ENCODE measurements at regions of chr14 and their contacts with region 1.

Region 1: DNA sequence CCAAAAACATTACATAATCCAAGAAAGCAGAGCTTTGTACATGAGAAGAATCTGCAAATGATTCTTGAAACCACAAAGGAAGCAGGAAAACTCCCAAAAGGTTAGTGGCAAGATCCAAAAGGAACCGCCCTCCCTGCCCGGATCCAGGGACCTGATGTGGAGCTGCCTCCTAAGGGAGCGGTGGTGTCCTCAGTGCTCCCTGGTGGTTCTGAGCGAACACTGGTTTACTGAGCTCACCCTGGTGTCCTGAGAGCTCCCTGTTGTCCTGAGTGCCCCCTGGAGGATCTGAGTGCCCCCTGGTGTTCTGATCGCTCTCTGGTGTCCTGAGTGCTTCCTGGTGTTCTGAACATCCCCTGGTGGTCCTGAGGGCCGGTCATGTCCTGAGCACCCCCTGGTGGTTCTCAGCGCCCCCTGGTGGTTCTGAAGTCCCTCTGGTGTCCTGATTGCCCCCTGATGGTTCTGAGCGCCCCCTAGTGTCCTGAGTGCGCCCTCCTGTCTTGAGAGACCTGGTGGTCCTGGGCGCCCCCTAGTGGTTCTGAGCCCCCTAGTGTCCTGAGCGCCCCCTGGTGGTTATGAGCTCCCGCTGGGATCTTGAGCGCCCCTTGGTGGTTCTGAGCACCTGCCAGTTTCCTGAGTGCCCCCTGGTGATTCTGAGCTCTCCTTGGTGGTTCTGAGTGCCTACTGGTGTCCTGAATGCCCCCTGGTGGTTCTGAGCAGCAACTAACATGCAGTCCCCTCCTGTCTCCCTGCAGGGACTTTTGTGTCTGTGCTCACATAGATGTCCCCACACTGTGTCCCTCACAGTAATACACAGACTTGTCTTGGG is 891.1 kb downstream of the TMEM121 start:
- DNase-seq: peak; percentile 55 to 87 (median 72)
- H3K4me3 ChIP-seq: no peak overlapping the region
- H3K4me3 Mint-ChIP-seq: peak overlapping the region in 2 of 8 donors; percentile 36 to 59
- H3K27ac ChIP-seq: no peak overlapping the region
- H3K27ac Mint-ChIP-seq: peak overlapping the region in 5 of 7 donors; percentile 37 to 91 (median 81)
- H3K4me1 ChIP-seq: no peaks in the 10 kb centered on the region
- H3K4me1 Mint-ChIP-seq: peaks cover 0 to 7% (median 3%) of the 10 kb centered on the region in 4 donors
- H3K27me3 ChIP-seq: no peaks in the 10 kb centered on the region
- H3K27me3 Mint-ChIP-seq: peaks cover 0 to 12% of the 10 kb centered on the region in 2 donors

Region 2: DNA sequence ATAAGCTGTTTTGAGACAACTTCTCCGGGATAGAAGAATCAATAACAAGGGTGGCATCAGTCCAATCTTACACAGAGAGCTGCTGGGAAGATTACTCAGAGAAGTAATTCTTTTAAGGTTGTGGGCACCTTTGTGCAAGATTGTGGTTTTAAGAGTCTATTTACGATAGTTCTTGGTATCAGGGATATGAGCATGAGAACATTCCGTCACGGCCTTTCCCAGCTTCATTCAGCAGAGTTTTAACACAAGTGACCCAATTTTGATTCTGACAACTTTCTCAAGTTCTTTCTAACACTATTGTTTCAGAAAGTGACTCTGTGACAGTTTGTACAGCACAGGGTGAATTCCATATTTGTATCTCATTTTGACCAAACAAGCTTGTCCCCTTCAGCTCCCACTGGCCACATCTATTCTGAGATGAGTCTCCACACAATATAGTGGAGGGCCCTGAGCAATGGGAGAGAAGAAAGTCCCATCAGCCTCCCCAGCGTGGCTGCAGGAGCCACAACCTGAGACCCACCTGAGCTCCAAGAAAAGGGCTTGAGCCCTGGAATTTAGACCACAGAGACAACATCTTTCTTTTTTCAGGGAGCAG is 21.9 kb before region 1 on chr14:
- CTCF ChIA-PET with region 1: interaction called, 13 read pairs
- POLR2A ChIA-PET with region 1: interaction called, 3 read pairs
- intact Hi-C with region 1: no loop called
- DNase-seq: peak in 4 of 5 donors; percentile 36 to 60 (median 52)
- H3K4me3 ChIP-seq: no peak overlapping the region
- H3K4me3 Mint-ChIP-seq: peak overlapping the region; percentile 29 to 90 (median 74)
- H3K27ac ChIP-seq: peak overlapping the region; percentile 38
- H3K27ac Mint-ChIP-seq: peak overlapping the region; percentile 56 to 95 (median 91)
- H3K4me1 ChIP-seq: peaks cover 27% of the 10 kb centered on the region
- H3K4me1 Mint-ChIP-seq: peaks cover 20 to 51% (median 38%) of the 10 kb centered on the region in 4 donors
- H3K27me3 ChIP-seq: no peaks in the 10 kb centered on the region
- H3K27me3 Mint-ChIP-seq: peaks cover 4 to 12% of the 10 kb centered on the region in 2 donors

Region 3: DNA sequence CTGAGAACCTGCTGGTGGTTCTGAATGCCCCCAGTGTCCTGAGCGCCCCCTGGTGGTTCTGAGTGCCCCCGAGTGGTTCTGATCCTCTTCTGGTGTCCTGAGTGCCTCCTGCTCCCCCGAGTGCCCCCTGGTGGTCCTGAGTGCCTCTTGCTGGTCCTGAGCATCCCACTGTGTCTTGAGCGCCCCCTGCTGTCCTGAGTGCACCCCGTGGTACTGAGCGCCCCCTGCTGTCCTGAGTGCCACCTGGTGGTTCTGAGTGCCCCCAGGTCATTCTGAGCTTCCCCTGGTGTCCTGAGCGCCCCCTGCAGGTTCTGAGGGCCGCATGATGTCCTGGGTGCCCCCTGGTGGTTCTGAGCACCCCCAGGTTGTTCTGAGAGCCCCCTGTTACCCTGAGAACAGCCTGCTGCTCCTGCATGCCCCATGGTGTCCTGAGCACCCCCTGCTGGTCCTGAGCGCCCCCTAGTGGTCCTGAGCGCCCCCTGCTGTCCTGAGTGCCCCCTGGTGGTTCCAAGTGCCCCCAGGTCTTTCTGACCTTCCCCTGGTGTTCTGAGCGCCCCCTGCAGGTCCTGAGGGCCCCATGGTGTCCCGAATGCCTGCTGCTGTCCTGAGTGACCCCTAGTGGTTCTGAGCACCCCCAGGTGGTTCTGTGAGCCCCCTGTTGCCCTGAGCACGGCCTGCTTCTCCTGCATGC is 274.3 kb after region 1 on chr14:
- CTCF ChIA-PET with region 1: no interaction called
- POLR2A ChIA-PET with region 1: no interaction called
- intact Hi-C with region 1: no loop called
- DNase-seq: peak; percentile 26 to 67 (median 37)
- H3K4me3 ChIP-seq: no peak overlapping the region
- H3K4me3 Mint-ChIP-seq: no peak overlapping the region
- H3K27ac ChIP-seq: no peak overlapping the region
- H3K27ac Mint-ChIP-seq: peak overlapping the region in 1 of 7 donors; percentile 84
- H3K4me1 ChIP-seq: no peaks in the 10 kb centered on the region
- H3K4me1 Mint-ChIP-seq: peaks cover 9 to 14% (median 11%) of the 10 kb centered on the region in 4 donors
- H3K27me3 ChIP-seq: no peaks in the 10 kb centered on the region
- H3K27me3 Mint-ChIP-seq: peaks cover 1 to 2% of the 10 kb centered on the region in 2 donors

Region 4: DNA sequence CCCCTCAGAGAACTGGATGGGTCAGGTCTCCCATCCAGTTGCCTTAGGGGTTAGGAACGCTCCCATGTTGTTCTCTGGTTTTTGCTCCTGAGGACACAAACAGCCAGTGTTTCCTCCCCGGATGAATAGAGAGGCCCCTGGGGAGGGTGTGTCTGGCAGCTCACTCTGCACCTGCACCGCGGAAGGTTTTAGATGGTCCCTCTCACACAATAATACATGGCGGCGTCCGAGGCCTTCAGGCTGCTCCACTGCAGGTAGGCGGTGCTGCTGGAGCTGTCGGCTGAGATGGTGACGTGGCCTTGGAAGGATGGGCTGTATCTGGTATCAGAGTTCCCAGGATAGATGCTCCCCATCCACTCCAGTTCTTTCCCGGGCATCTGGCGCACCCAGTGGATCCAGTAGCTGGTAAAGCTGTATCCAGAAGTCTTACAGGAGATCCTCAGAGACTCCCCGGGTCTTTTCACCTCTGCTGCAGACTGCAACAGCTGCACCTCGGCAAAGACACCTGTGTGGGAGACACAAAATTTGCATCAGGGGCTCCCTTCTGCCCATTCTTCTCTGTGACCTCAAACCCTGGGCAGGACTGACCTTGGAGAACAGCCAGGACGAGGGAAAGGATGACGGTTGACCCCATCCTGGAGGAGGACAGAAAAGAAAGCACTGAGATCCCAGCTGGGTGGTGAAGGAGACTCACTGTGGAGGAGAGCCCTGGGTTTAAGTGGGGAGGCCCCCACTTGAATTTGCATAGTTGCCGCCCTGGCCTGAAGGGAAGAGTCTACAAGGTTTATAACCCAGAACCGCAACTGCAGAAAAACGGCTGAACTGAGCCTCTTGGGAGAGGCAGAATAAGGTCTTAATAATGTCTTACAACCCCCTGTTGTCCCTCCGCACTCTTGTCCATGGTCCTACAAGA is 433.7 kb after region 1 on chr14:
- CTCF ChIA-PET with region 1: no interaction called
- POLR2A ChIA-PET with region 1: no interaction called
- intact Hi-C with region 1: no loop called
- DNase-seq: no peak
- H3K4me3 ChIP-seq: no peak overlapping the region
- H3K4me3 Mint-ChIP-seq: no peak overlapping the region
- H3K27ac ChIP-seq: no peak overlapping the region
- H3K27ac Mint-ChIP-seq: no peak overlapping the region
- H3K4me1 ChIP-seq: no peaks in the 10 kb centered on the region
- H3K4me1 Mint-ChIP-seq: peaks cover 0 to 6% (median 3%) of the 10 kb centered on the region in 4 donors
- H3K27me3 ChIP-seq: no peaks in the 10 kb centered on the region
- H3K27me3 Mint-ChIP-seq: peaks cover 0 to 5% of the 10 kb centered on the region in 2 donors

Measured in CD4-positive, alpha-beta memory T cell (primary cell).